ENCODE measurements at regions of chr10 and their contacts with region 1.

Region 1: DNA sequence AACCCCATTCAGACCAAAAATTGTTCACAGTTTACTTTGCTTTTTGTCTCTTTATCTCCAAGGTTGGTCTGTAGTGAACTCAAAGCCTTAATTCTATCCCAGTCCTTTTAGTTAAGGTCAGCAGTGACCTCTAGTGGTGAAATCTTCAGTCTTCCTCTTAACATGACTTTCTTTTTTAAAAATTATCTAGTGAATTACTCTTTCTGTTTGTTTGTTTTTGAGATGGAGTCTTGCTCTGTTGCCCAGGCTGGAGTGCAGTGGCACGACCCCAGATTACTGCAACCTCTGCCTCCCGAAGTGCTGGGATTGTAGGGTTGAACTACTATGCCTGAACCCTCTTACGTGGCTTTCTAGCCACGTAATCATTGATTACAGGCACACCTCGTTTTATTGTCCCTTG is 25.0 kb downstream of the ZNF487 start:
- DNase-seq: peak; percentile 13
- ATAC-seq: peak; percentile 86
- H3K4me3 Mint-ChIP-seq: no peak overlapping the region
- H3K27ac Mint-ChIP-seq: no peak overlapping the region
- H3K4me1 Mint-ChIP-seq: peaks cover 12% of the 10 kb centered on the region
- H3K27me3 Mint-ChIP-seq: no peaks in the 10 kb centered on the region

Region 2: DNA sequence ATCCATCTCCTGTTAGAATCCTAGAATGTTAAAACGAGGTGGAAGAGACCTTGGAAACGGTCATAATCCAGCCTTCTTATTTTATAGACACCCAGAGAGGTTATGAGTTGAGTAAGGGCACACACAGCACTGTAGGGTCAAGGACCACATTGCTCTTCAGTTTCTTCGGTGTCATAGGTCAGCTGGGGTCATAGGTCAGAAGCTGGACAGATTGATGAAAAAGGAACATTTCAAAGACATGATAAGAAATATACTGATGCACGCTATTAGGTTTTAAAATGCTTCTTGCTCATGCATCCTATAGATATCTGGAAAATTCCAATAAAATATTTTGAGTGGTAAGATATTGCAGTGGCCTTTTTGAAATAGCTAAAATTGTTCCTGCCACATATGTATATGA is 739.4 kb before region 1 on chr10:
- CTCF ChIA-PET with region 1: no interaction called
- POLR2A ChIA-PET with region 1: no interaction called
- intact Hi-C with region 1: no loop called
- DNase-seq: no peak
- ATAC-seq: no peak
- H3K4me3 Mint-ChIP-seq: no peak overlapping the region
- H3K27ac Mint-ChIP-seq: no peak overlapping the region
- H3K4me1 Mint-ChIP-seq: no peaks in the 10 kb centered on the region
- H3K27me3 Mint-ChIP-seq: peaks cover 15% of the 10 kb centered on the region

Region 3: DNA sequence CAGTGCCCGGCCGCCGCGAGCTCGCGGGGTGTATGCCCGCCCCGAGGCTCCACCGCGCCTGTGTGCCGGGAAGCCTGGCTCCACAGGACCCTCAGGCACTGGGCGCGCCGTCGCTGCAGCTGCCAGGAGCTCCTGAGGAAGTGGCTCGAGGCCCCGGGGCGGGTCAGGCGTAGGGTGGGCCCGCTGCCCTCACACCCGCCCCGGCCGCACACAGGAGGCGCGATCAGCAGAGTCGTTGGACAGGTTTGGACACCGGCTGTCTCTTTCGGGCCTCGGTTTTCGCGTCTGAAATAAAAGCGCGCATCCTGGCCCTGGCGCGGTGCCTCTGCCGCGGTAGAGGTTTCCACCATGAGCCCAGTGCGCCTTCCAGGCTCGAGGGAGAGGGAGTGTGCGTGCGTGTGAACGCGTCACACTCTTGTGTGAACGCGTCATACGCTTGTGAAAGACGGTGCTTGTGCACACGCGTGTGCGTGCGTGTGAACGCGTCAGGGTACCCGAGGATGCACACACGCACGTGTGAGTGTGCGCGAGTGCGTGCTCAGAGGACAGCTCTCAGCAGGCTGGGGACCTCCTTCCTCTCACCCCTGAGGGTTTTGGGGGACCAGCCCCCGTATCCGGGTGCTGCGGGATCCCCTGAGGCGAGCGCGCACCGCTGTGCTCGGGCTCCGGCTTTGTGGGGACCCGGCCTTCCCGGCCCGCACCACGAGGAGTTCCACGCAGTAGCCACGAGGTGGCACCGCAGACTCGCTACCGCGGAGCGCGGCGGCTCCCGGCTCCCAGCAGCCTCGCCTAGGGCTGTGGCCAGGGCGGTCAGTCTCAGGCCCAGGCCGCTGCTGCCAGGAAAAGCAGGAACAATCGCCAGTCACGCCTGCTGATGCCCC is 595.6 kb before region 1 on chr10:
- CTCF ChIA-PET with region 1: interaction called, 3 read pairs
- POLR2A ChIA-PET with region 1: no interaction called
- intact Hi-C with region 1: loop called in 1 of 2 experiments (anchors 2 kb)
- DNase-seq: peak; percentile 75
- ATAC-seq: peak; percentile 68
- H3K4me3 Mint-ChIP-seq: no peak overlapping the region
- H3K27ac Mint-ChIP-seq: no peak overlapping the region
- H3K4me1 Mint-ChIP-seq: peaks cover 4% of the 10 kb centered on the region
- H3K27me3 Mint-ChIP-seq: peaks cover 32% of the 10 kb centered on the region

Region 4: GRCh38 chr10:43265799-43266721 is 195.9 kb before region 1 on chr10:
- CTCF ChIA-PET with region 1: interaction called, 5 read pairs
- POLR2A ChIA-PET with region 1: no interaction called
- intact Hi-C with region 1: loop called in 1 of 2 experiments (anchors 2 kb)
- DNase-seq: peak; percentile 62
- ATAC-seq: peak; percentile 76
- H3K4me3 Mint-ChIP-seq: peak overlapping the region; percentile 62
- H3K27ac Mint-ChIP-seq: no peak overlapping the region
- H3K4me1 Mint-ChIP-seq: peaks cover 3% of the 10 kb centered on the region
- H3K27me3 Mint-ChIP-seq: peaks cover 46% of the 10 kb centered on the region

Region 5: GRCh38 chr10:43292755-43293676 is 168.9 kb before region 1 on chr10:
- CTCF ChIA-PET with region 1: interaction called, 15 read pairs
- POLR2A ChIA-PET with region 1: no interaction called
- intact Hi-C with region 1: loop called (anchors 1 kb)
- DNase-seq: peak; percentile 66
- ATAC-seq: peak; percentile 79
- H3K4me3 Mint-ChIP-seq: no peak overlapping the region
- H3K27ac Mint-ChIP-seq: peak overlapping the region; percentile 62
- H3K4me1 Mint-ChIP-seq: peaks cover 24% of the 10 kb centered on the region
- H3K27me3 Mint-ChIP-seq: peaks cover 3% of the 10 kb centered on the region

Region 6: GRCh38 chr10:43348511-43349312 is 113.2 kb before region 1 on chr10:
- CTCF ChIA-PET with region 1: interaction called, 5 read pairs
- POLR2A ChIA-PET with region 1: interaction called, 3 read pairs
- intact Hi-C with region 1: loop called (anchors 1 kb)
- DNase-seq: peak; percentile 92
- ATAC-seq: peak; percentile 100
- H3K4me3 Mint-ChIP-seq: no peak overlapping the region
- H3K27ac Mint-ChIP-seq: peak overlapping the region; percentile 45
- H3K4me1 Mint-ChIP-seq: peaks cover 15% of the 10 kb centered on the region
- H3K27me3 Mint-ChIP-seq: peaks cover 12% of the 10 kb centered on the region